GM12878 (cell line): ENCODE measurements at regions of chr2 and their contacts with region 1.

Region 1: DNA sequence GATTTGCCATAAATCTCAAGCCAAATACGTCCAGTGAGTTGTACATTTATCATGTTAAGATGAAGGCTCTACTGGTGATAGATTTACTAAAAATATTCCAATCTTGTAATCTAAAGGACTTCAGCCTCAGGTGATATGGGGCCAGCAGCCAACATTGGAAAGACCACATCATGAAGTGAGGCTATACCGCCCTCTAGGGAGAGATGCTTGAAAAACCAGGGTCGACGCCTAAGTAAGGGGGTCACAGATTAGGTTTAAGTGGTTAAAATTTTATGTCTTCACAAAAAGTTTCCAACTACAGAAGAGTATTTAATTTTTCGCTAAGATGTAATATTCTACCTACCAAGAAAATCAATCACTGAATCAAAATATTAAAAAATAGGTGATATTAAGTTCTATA is 33.3 kb downstream of the DOCK10 start:
- DNase-seq: no peak
- ATAC-seq: peak; percentile 70
- H3K4me3 ChIP-seq: no peak overlapping the region
- H3K27ac ChIP-seq: peak overlapping the region; percentile 65
- H3K4me1 ChIP-seq: peaks cover 24% of the 10 kb centered on the region
- H3K27me3 ChIP-seq: no peaks in the 10 kb centered on the region
- CTCF ChIP-seq: peak; percentile 46 to 61 (median 61)
- EP300 ChIP-seq: no peak
- POLR2A ChIP-seq: no peak
- RAD21 ChIP-seq: peak; percentile 69

Region 2: GRCh38 chr2:225025917-225026571 is 17.1 kb after region 1 on chr2:
- CTCF ChIA-PET with region 1: interaction called, 5 read pairs
- POLR2A ChIA-PET with region 1: interaction called, 9 read pairs
- RAD21 ChIA-PET with region 1: no interaction called
- SMC1A ChIA-PET with region 1: interaction called, 12 read pairs
- in situ Hi-C with region 1: no loop called
- intact Hi-C with region 1: no loop called
- DNase-seq: no peak
- ATAC-seq: peak; percentile 69
- H3K4me3 ChIP-seq: no peak overlapping the region
- H3K27ac ChIP-seq: 0 out of 2 replicates have a peak overlapping the region, but pooled peaks have one; percentile 1
- H3K4me1 ChIP-seq: peaks cover 5% of the 10 kb centered on the region; the same call in 1 of the 2 replicates
- H3K27me3 ChIP-seq: no peaks in the 10 kb centered on the region
- CTCF ChIP-seq: no peak
- EP300 ChIP-seq: no peak
- POLR2A ChIP-seq: no peak
- RAD21 ChIP-seq: no peak

Region 3: DNA sequence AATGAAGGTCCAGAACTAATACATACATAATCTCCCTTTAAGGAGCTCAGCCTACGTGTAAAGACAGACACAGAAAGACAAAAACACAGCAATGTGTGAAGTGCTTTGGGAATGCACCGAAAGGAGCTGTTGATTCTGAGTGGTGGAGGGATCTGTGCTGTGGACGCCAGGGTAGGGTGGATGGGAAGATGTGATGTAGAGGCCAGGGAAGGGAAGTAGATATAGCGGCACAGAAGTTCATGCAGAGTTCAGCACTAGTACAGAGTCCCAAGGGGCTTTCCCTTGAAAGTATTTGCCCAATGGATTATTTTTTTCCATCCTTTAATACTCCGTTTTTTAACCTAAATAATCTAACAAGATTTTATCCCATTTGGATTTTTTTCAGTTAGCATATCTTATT is 65.4 kb after region 1 on chr2:
- CTCF ChIA-PET with region 1: no interaction called
- POLR2A ChIA-PET with region 1: no interaction called
- RAD21 ChIA-PET with region 1: no interaction called
- SMC1A ChIA-PET with region 1: no interaction called
- in situ Hi-C with region 1: no loop called
- intact Hi-C with region 1: no loop called
- DNase-seq: no peak
- ATAC-seq: no peak
- H3K4me3 ChIP-seq: no peak overlapping the region
- H3K27ac ChIP-seq: no peak overlapping the region
- H3K4me1 ChIP-seq: no peaks in the 10 kb centered on the region
- H3K27me3 ChIP-seq: no peaks in the 10 kb centered on the region; a peak in 1 of 4 replicates
- CTCF ChIP-seq: no peak
- EP300 ChIP-seq: no peak
- POLR2A ChIP-seq: no peak
- RAD21 ChIP-seq: no peak